ENCODE measurements at regions of chr13 and their contacts with region 1.

Region 1: GRCh38 chr13:27449936-27450828 is at the start of gene MTIF3:
- DNase-seq: peak; percentile 89
- ATAC-seq: peak; percentile 81
- H3K4me3 Mint-ChIP-seq: peak within 1 kb of the TSS; percentile 96
- H3K27ac Mint-ChIP-seq: peak within 1 kb of the TSS; percentile 98
- H3K4me1 Mint-ChIP-seq: peaks cover 69% of the 10 kb centered on the region
- H3K27me3 Mint-ChIP-seq: no peaks in the 10 kb centered on the region
- CTCF ChIP-seq: no peak
- total RNA-seq, gene MTIF3: 39.8 and 50.1 TPM in 2 replicates

Region 2: GRCh38 chr13:27130979-27131623 is 319.1 kb before region 1 on chr13:
- CTCF ChIA-PET with region 1: no interaction called
- POLR2A ChIA-PET with region 1: no interaction called
- intact Hi-C with region 1: loop called (anchors 5 kb)
- DNase-seq: peak; percentile 28
- ATAC-seq: peak; percentile 88
- H3K4me3 Mint-ChIP-seq: peak overlapping the region; percentile 2
- H3K27ac Mint-ChIP-seq: peak overlapping the region; percentile 88
- H3K4me1 Mint-ChIP-seq: peaks cover 91% of the 10 kb centered on the region
- H3K27me3 Mint-ChIP-seq: no peaks in the 10 kb centered on the region
- CTCF ChIP-seq: no peak

Region 3: GRCh38 chr13:27481766-27482165 is 31.6 kb after region 1 on chr13:
- CTCF ChIA-PET with region 1: interaction called, 3 read pairs
- POLR2A ChIA-PET with region 1: interaction called, 124 read pairs
- intact Hi-C with region 1: loop called (anchors 1 kb)
- DNase-seq: no peak
- ATAC-seq: no peak
- H3K4me3 Mint-ChIP-seq: no peak overlapping the region
- H3K27ac Mint-ChIP-seq: peak overlapping the region; percentile 95
- H3K4me1 Mint-ChIP-seq: peaks cover 63% of the 10 kb centered on the region
- H3K27me3 Mint-ChIP-seq: no peaks in the 10 kb centered on the region
- CTCF ChIP-seq: no peak

Region 4: DNA sequence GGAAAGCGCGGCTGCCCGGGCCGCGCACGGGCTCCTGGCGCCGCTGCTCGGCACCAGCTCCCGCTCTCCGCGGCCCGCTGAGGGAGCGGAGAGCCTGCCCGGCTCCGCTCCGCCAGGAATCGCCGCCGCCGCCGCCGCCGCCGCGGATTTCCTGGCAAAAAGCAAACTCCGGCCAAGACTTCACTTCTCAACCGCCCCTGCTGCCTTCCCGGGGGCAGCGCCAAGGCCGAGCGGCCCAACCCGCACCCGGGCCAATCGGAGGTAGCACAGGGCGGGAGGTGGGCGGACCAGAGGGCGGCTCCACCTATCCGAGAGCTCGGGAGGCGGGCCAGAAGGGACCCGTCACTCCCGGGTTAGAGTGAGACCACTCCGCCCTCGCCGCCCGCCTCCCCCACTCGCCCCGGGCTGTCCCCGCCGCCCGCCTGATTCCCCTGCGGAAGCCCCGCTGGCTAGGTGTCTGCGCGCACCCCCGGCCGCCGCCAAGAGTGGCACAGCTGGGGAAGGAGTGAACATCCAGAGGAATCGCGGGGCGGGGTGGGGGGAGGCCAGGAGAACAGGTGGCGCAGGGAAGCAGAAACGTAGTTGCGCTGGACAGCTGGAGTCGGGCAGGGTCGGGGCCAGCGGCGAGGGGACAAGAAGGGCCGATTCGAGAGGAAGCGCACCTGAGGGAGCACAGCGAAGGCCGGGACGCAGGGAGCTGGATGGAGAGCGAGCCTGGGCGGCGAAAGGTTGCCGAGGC is 170.4 kb after region 1 on chr13 and contains the start of gene LNX2:
- CTCF ChIA-PET with region 1: interaction called, 3 read pairs
- POLR2A ChIA-PET with region 1: interaction called, 84 read pairs
- intact Hi-C with region 1: loop called (anchors 1 kb)
- DNase-seq: peak; percentile 97
- ATAC-seq: peak; percentile 87
- H3K4me3 Mint-ChIP-seq: peak within 1 kb of the TSS; percentile 93
- H3K27ac Mint-ChIP-seq: peak within 1 kb of the TSS; percentile 93
- H3K4me1 Mint-ChIP-seq: peaks cover 54% of the 10 kb centered on the region
- H3K27me3 Mint-ChIP-seq: no peaks in the 10 kb centered on the region
- CTCF ChIP-seq: no peak
- total RNA-seq, gene LNX2: 6.1 and 7.1 TPM in 2 replicates